ENCODE measurements at regions of chr16 and their contacts with region 1.

Region 1: GRCh38 chr16:31301708-31302400 is 42.1 kb downstream of the ITGAM start:
- DNase-seq: no peak
- ATAC-seq: 0 out of 2 replicates have a peak, but pooled peaks have one; percentile 65
- H3K4me3 ChIP-seq: no peak overlapping the region
- H3K27ac ChIP-seq: no peak overlapping the region
- H3K4me1 ChIP-seq: no peaks in the 10 kb centered on the region
- H3K27me3 ChIP-seq: peaks cover 9% of the 10 kb centered on the region
- CTCF ChIP-seq: no peak; the same call in 1 of the 2 replicates

Region 2: DNA sequence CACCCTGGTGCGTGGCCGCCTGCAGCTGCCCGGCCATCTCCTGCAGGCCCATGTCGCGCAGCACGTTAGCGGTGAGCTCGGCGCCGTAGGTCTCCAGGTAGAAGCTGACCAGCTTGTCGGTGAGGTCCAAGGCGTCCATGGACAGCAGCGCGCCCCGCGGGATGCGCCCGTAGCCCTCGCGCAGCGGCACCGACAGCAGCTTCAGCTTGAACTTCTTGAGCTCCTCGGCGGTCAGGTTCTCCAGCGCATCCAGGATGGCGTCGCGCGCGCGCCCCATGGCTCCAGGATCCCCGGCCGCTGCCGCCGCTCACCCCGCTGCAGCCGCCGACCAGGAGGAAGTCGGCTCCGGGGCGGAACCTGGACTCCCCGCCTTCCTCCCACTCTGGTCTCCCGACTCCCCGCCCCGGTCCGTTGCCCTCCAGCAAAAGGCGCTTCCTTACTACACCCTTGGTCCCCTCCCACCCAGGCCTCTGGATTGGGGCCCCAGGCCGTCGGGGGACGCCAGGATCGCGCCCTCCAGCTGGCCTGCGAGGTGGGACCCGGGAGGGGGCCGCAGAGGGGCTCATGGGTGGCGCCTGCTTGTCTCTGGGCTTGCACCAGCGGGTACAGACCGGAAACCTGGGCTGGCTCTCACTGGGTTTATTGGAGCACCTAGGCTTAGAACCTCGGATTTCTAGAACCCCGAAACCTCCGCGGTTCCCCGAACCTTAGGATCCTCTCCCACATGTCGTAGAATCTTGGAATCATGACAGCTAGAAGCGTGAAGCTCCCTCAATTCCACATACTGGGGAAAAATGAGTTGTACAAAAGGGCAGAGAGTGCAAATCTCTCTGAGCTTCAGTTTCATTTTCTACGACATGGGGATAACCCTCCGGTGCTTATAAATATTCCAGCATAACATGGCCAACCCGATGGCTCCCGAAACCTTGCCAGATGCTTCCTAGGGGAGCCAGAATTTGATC is 99.2 kb before region 1 on chr16 and contains the start of gene PYCARD:
- CTCF ChIA-PET with region 1: no interaction called
- POLR2A ChIA-PET with region 1: no interaction called
- in situ Hi-C with region 1: no loop called
- intact Hi-C with region 1: no loop called
- DNase-seq: no peak
- ATAC-seq: peak; percentile 64
- H3K4me3 ChIP-seq: peak within 1 kb of the TSS; percentile 51 to 69
- H3K27ac ChIP-seq: peak within 1 kb of the TSS; percentile 71
- H3K4me1 ChIP-seq: peaks cover 22% of the 10 kb centered on the region
- H3K27me3 ChIP-seq: no peaks in the 10 kb centered on the region
- CTCF ChIP-seq: no peak
- total RNA-seq, gene PYCARD: 99.4 TPM

Region 3: GRCh38 chr16:31229501-31229900 is 72.4 kb before region 1 on chr16:
- CTCF ChIA-PET with region 1: interaction called, 11 read pairs
- POLR2A ChIA-PET with region 1: no interaction called
- in situ Hi-C with region 1: no loop called
- intact Hi-C with region 1: no loop called
- DNase-seq: no peak
- ATAC-seq: no peak
- H3K4me3 ChIP-seq: no peak overlapping the region
- H3K27ac ChIP-seq: no peak overlapping the region
- H3K4me1 ChIP-seq: no peaks in the 10 kb centered on the region
- H3K27me3 ChIP-seq: no peaks in the 10 kb centered on the region
- CTCF ChIP-seq: no peak